ENCODE measurements at regions of chr20 and their contacts with region 1.

Region 1: DNA sequence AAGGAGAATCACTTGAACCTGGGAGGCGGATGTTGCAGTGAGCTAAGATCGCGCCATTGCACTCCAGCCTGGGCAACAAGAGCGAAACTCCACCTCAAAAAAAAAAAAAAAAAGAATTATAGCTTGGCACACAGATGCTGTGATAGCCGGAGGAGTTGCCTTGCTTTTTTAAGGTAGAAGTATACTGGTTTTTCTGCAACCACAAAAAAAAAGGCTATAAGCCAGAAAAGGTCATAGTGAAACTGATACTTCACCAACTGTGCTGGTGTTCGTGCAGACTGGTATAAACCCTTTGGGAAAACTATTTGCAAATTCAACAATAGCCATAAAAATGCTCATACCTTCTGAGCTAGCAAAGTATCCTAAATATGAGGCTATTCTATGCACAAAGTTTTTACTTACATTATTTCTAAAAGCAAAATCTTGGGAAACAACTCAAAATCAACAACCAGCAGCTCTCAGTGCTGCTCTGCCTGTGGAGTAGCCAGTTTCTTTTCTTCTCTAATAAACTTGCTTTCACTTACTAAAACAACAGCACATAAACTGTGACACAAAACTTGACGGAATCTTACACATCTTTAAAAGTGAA is 44.0 kb downstream of the B4GALT5 start:
- DNase-seq: peak; percentile 22
- H3K4me3 Mint-ChIP-seq: peak overlapping the region; percentile 37
- H3K27ac Mint-ChIP-seq: peak overlapping the region; percentile 23
- H3K4me1 Mint-ChIP-seq: peaks cover 62% of the 10 kb centered on the region
- H3K27me3 Mint-ChIP-seq: no peaks in the 10 kb centered on the region

Region 2: DNA sequence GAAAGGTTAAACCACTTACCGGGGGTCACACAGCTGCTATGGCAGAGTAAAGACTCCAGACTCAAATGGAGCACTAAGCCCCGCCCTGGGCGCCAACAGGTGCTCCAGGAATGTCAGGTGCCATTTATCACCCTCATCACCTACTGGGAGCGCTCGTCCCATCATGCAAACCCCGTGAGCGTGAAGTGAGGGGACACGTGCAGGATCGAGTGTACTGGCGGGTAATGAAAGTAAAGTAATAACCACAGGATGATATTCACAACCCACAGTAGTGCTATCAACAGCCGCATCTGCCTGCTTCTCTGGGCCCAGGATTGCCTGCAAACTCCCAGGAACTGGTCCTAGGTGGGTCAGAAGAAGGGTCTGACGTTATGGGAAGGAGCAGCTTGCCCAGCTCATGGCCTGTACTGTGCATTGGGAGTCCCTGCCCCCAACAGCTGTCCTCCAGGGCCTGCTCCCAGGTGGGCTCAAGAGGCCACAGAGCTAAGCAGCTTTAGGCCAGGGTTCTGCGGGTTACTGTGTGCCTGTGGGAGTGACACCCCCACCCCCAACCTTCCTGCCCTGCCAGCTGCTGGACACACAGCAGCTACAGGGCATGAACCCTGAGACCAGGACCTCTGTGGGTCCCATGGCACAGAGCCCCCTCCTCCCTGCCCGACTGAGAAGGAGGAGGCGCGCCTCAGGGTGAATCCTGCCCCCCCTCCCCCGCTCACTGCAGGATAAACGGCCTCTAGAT is 1763.9 kb before region 1 on chr20:
- intact Hi-C with region 1: no loop called
- DNase-seq: no peak
- H3K4me3 Mint-ChIP-seq: no peak overlapping the region
- H3K27ac Mint-ChIP-seq: no peak overlapping the region
- H3K4me1 Mint-ChIP-seq: no peaks in the 10 kb centered on the region
- H3K27me3 Mint-ChIP-seq: no peaks in the 10 kb centered on the region

Region 3: DNA sequence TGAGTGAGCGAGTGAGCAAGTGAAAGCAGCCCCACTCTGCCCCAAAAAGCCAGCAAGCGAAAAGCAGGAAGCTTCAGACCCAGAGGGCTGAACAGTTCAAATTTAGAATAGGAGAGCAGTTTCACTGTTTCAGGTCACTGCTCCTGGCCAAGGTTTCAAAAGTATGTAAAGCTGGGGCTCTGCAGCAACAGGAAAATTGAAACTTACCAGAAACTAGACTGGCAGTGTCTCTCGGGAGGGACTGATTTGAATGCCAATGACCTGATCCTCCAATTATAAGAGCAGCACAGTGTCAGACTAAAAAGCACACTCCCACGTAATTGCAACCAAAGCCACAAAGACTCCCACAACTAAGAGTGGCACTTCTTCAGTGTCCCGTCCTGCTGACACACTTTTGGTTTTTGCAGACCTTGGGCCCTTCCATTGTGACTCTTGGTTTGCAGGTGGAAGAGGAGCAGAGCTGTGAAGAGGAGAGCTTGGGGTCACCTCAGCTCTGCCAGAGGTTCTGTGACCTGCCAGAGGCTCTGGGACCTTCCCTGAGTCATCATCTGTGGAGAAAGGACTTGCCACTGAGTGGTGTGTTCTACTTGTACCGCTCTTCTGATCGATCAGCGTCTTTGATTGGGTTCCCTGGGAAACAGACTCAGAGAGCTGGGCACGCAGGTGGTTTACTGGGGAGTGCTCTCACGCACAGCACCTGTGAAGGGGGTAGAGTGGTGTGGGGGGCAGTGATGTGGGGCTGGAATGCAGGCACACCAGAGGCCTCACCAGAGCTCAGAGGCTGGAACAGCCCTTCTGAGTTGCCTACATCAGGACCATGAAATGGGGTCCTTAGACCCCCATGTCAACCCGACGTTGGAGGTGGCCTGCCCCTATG is 49.1 kb before region 1 on chr20:
- intact Hi-C with region 1: loop called (anchors 1 kb)
- DNase-seq: no peak
- H3K4me3 Mint-ChIP-seq: no peak overlapping the region
- H3K27ac Mint-ChIP-seq: no peak overlapping the region
- H3K4me1 Mint-ChIP-seq: peaks cover 7% of the 10 kb centered on the region
- H3K27me3 Mint-ChIP-seq: peaks cover 2% of the 10 kb centered on the region

Region 4: GRCh38 chr20:49699200-49699992 is 29.7 kb after region 1 on chr20:
- intact Hi-C with region 1: loop called (anchors 1 kb)
- DNase-seq: no peak
- H3K4me3 Mint-ChIP-seq: no peak overlapping the region
- H3K27ac Mint-ChIP-seq: peak overlapping the region; percentile 30
- H3K4me1 Mint-ChIP-seq: peaks cover 53% of the 10 kb centered on the region
- H3K27me3 Mint-ChIP-seq: no peaks in the 10 kb centered on the region

Region 5: GRCh38 chr20:50172347-50173013 is 502.8 kb after region 1 on chr20:
- intact Hi-C with region 1: no loop called
- DNase-seq: no peak
- H3K4me3 Mint-ChIP-seq: no peak overlapping the region
- H3K27ac Mint-ChIP-seq: no peak overlapping the region
- H3K4me1 Mint-ChIP-seq: peaks cover 6% of the 10 kb centered on the region
- H3K27me3 Mint-ChIP-seq: peaks cover 5% of the 10 kb centered on the region

Measured in activated T-helper 2 cell treated with anti-CD3 and anti-CD28 coated beads, Interferon-gamma antibody, Interleukin-2, Interleukin-4, amounts not matched to agents 10 μg/mL and 5 μg/mL and 100 μg/mL, durations not matched to agents 14 hours and 24 hours and 36 hours (primary cell).